ENCODE measurements at regions of chr7 and their contacts with region 1.

Region 1: DNA sequence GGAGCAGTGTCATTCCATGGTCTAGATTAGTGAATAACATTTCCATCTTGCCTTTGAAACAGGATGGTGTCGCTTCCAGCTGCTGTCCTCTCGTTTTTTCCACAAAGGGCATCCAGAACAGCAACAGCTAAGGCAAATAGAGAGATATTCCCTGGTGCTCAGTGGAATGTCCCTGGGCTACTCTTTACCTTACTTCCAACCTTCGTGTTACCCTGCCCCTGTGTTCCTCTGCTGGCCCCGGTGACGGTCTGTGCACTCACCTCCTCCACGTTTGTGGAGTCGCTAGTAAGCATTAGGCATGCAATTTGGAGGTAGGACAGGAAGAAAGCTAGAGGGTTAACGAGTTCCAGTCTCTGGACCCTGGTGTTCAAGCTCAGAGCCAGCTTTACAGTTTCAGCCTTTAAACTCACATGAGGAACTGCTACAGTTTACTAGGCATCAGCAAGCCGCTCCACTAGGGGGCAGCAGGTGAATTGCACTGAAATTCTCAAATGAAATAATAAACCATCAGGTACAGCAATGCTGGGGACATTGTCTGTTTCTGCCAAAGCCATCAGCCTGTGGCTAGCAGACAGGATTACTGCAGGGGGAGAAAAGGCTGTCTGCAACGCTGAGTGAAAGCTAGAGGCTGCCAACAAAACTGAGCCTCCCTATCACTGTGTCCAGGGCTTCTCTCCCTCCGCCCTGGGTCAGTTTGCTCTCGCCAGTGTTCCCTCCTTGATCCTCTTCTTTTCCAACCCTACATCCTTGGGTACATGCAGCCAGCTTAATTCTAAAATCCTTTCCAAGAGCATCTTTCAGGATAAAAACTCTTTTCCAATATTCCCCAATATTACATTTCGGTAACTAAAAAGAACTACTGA is 9.0 kb downstream of the MRPL32 start:
- DNase-seq: peak; percentile 84
- ATAC-seq: peak; percentile 90
- H3K4me3 ChIP-seq: no peak overlapping the region
- H3K27ac ChIP-seq: no peak overlapping the region
- H3K4me1 ChIP-seq: no peaks in the 10 kb centered on the region
- H3K27me3 ChIP-seq: no peaks in the 10 kb centered on the region
- CTCF ChIP-seq: peak; percentile 87

Region 2: DNA sequence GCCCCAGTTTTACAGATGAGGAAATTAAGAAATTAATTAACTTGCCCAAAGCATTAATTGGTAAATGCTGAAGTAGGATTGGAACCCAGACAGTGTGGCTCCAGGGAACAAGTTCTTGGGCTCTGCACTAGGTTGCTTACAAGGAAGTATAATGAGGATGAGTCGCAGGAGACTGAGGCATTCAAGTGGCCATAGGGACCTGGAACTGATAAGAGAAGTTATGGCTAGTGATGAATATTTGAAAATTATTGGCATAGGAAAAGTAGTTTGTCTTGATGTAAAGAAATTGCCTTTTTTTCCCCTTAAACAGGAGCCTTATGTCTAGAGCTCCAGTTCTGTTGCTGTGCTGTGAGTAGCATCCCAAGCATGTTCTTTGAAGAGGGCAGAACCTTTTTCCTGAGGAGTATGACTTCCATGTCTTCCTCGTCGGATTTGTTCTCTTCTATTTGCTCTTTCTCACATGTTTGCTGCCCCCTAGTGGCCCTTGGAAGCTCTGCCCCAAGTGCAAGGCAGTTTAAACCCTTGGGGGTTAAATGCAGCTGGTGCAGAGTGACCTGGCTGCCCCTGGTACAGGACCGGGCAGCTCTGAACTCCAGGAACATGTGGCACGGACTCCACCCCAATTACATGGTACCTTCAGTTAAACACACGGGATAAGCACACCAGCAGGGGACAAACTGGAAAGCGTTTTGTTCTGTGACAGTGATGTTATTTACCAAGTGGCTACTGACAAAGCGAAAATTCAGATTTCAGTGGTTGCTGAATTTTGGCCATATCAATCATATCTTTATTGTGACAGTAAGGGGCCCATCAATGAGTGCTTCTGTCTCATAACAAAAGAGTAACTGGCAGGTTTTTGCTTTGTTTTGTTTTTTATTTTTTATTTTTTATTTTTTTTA is 320.0 kb after region 1 on chr7:
- intact Hi-C with region 1: loop called (anchors 10 kb)
- DNase-seq: peak; percentile 79
- ATAC-seq: peak; percentile 95
- H3K4me3 ChIP-seq: no peak overlapping the region
- H3K27ac ChIP-seq: no peak overlapping the region
- H3K4me1 ChIP-seq: no peaks in the 10 kb centered on the region
- H3K27me3 ChIP-seq: no peaks in the 10 kb centered on the region
- CTCF ChIP-seq: peak; percentile 94